ENCODE measurements at regions of chr12 and their contacts with region 1.

Region 1: GRCh38 chr12:68331869-68332727 is at the start of gene MDM1:
- DNase-seq: peak; percentile 97
- ATAC-seq: peak; percentile 97
- H3K4me3 ChIP-seq: peak within 1 kb of the TSS; percentile 79 to 85 (median 82)
- H3K4me3 Mint-ChIP-seq: peak within 1 kb of the TSS; percentile 94
- H3K27ac ChIP-seq: peak within 1 kb of the TSS; percentile 55 to 78
- H3K27ac Mint-ChIP-seq: peak within 1 kb of the TSS; percentile 90
- H3K4me1 ChIP-seq: peaks cover 12 to 14% of the 10 kb centered on the region in 2 donors
- H3K4me1 Mint-ChIP-seq: peaks cover 40% of the 10 kb centered on the region
- H3K27me3 ChIP-seq: no peaks in the 10 kb centered on the region
- H3K27me3 Mint-ChIP-seq: no peaks in the 10 kb centered on the region
- CTCF ChIP-seq: no peak
- total RNA-seq, gene MDM1: 38.3 and 38.9 TPM in 2 replicates

Region 2: GRCh38 chr12:67268896-67269631 is 1063.0 kb before region 1 on chr12 and contains the start of gene CAND1:
- CTCF ChIA-PET with region 1: no interaction called
- POLR2A ChIA-PET with region 1: no interaction called
- intact Hi-C with region 1: loop called (anchors 1 kb)
- DNase-seq: peak; percentile 99
- ATAC-seq: peak; percentile 78
- H3K4me3 ChIP-seq: peak within 1 kb of the TSS; percentile 67 to 94 (median 80)
- H3K4me3 Mint-ChIP-seq: peak within 1 kb of the TSS; percentile 86
- H3K27ac ChIP-seq: peak within 1 kb of the TSS; percentile 90 to 94
- H3K27ac Mint-ChIP-seq: peak within 1 kb of the TSS; percentile 91
- H3K4me1 ChIP-seq: peaks cover 24 to 25% of the 10 kb centered on the region in 2 donors
- H3K4me1 Mint-ChIP-seq: peaks cover 34% of the 10 kb centered on the region
- H3K27me3 ChIP-seq: no peaks in the 10 kb centered on the region
- H3K27me3 Mint-ChIP-seq: no peaks in the 10 kb centered on the region
- CTCF ChIP-seq: no peak
- total RNA-seq, gene CAND1: 108 and 110 TPM in 2 replicates

Region 3: DNA sequence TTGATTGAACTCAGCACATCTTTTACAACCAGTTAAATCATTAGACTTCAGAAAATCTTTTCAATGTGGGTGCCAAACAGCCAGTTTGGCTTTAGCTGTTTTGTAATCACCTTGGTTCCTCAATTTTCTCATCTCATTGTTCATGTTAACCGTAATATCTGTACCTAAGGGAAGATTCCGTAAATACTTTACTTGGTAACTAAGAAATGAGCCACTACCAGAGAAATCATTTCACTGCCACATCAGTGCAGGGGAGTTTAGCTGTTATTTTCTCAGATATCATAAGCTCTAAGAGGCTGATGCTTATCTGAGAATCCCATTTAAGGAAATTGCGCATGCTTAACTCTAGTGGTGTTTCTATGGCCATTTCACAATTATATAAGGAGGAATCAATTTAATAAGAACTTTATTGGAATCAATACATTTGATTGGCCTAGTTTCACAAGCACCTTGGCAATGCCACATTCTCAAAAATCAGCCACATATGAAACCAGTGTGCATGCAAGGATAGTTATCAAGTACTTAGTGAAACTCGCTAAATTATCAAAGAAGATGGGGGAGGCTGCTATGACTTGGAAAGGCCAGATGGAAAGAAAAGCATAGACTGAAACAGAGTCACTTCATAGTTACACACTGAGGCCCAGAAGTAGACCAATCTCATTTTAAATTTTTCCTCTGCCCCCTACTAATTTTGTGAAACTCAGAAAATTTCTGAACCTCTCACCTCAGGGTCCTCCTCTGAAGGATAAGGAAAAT is 50.6 kb before region 1 on chr12:
- CTCF ChIA-PET with region 1: no interaction called
- POLR2A ChIA-PET with region 1: no interaction called
- intact Hi-C with region 1: no loop called
- DNase-seq: no peak
- ATAC-seq: no peak
- H3K4me3 ChIP-seq: no peak overlapping the region
- H3K4me3 Mint-ChIP-seq: no peak overlapping the region
- H3K27ac ChIP-seq: no peak overlapping the region
- H3K27ac Mint-ChIP-seq: no peak overlapping the region
- H3K4me1 ChIP-seq: no peaks in the 10 kb centered on the region
- H3K4me1 Mint-ChIP-seq: no peaks in the 10 kb centered on the region
- H3K27me3 ChIP-seq: peaks cover 0 to 5% (median 1%) of the 10 kb centered on the region in 4 experiments
- H3K27me3 Mint-ChIP-seq: peaks cover 4% of the 10 kb centered on the region
- CTCF ChIP-seq: no peak

Region 4: DNA sequence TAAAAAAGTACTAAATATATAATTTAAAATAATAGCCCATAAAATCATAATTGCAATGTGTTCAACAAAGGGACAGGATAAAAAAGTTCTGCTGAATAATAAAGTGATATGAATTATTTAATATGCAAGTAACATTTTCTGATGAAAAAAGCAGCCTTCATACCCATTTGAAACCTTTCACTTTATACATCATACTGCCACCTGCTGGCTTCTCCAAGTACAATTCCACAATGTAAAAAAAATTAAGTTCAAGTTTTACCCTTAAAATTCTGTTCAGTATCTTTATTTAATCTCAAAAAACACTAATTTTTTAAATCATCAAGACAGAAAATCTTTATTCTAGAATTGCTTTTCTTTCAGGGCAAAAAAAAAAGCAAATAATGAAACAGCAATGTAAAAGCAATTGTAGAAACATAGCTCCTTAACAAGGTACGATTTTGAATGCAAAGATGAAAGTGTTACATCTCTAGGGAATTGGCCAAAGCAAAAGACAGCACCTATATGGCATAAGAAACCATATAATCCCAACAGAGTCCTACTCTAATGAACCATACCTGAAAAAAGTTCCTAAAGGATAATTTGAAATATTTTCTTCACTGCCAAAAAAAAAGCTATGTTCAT is 14.9 kb before region 1 on chr12:
- CTCF ChIA-PET with region 1: interaction called, 15 read pairs
- POLR2A ChIA-PET with region 1: no interaction called
- intact Hi-C with region 1: no loop called
- DNase-seq: peak; percentile 65
- ATAC-seq: no peak
- H3K4me3 ChIP-seq: no peak overlapping the region
- H3K4me3 Mint-ChIP-seq: no peak overlapping the region
- H3K27ac ChIP-seq: no peak overlapping the region
- H3K27ac Mint-ChIP-seq: no peak overlapping the region
- H3K4me1 ChIP-seq: no peaks in the 10 kb centered on the region
- H3K4me1 Mint-ChIP-seq: no peaks in the 10 kb centered on the region
- H3K27me3 ChIP-seq: no peaks in the 10 kb centered on the region
- H3K27me3 Mint-ChIP-seq: no peaks in the 10 kb centered on the region
- CTCF ChIP-seq: peak; percentile 89

Region 5: DNA sequence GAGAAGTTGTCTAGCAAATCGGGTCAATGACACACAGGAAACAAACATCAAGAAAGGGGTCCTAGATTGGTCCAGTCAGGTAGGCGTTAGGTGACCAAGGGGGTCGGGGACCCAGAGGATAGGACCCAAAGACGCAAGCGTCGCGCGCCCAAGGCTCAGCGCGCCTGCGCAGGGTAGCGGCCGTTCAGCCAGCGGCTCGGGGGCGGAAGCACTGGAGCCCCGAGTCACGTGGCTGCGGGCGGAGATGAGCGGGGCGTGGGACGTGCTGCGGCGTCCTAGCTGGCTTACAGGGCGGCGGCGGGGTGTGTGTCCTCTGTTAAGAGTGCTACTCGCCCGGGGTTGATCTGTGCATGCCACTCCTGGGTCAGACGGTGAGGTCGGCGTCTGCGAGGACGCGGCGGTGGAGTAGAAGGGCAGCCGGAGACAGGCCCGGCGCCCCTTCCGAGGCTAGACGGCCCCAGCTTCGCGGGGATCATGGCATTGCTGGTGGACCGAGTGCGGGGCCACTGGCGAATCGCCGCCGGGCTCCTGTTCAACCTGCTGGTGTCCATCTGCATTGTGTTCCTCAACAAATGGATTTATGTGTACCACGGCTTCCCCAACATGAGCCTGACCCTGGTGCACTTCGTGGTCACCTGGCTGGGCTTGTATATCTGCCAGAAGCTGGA is 413.9 kb after region 1 on chr12 and contains the start of gene SLC35E3:
- CTCF ChIA-PET with region 1: interaction called, 4 read pairs
- POLR2A ChIA-PET with region 1: no interaction called
- intact Hi-C with region 1: loop called (anchors 1 kb)
- DNase-seq: peak; percentile 93
- ATAC-seq: peak; percentile 97
- H3K4me3 ChIP-seq: peak within 1 kb of the TSS; percentile 75 to 96 (median 89)
- H3K4me3 Mint-ChIP-seq: peak within 1 kb of the TSS; percentile 97
- H3K27ac ChIP-seq: peak within 1 kb of the TSS; percentile 71 to 89
- H3K27ac Mint-ChIP-seq: peak within 1 kb of the TSS; percentile 95
- H3K4me1 ChIP-seq: peaks cover 21 to 26% of the 10 kb centered on the region in 2 donors
- H3K4me1 Mint-ChIP-seq: peaks cover 53% of the 10 kb centered on the region
- H3K27me3 ChIP-seq: no peaks in the 10 kb centered on the region
- H3K27me3 Mint-ChIP-seq: no peaks in the 10 kb centered on the region
- CTCF ChIP-seq: no peak
- total RNA-seq, gene SLC35E3: 15.1 TPM in 2 replicates

Region 6: GRCh38 chr12:69585189-69586062 is 1253.3 kb after region 1 on chr12 and contains the start of gene CCT2:
- CTCF ChIA-PET with region 1: interaction called, 3 read pairs
- POLR2A ChIA-PET with region 1: no interaction called
- intact Hi-C with region 1: loop called (anchors 5 kb)
- DNase-seq: peak; percentile 98
- ATAC-seq: peak; percentile 93
- H3K4me3 ChIP-seq: peak within 1 kb of the TSS; percentile 83 to 96 (median 90)
- H3K4me3 Mint-ChIP-seq: peak within 1 kb of the TSS; percentile 97
- H3K27ac ChIP-seq: peak within 1 kb of the TSS; percentile 91 to 97
- H3K27ac Mint-ChIP-seq: peak within 1 kb of the TSS; percentile 96
- H3K4me1 ChIP-seq: peaks cover 6 to 11% of the 10 kb centered on the region in 2 donors
- H3K4me1 Mint-ChIP-seq: peaks cover 12% of the 10 kb centered on the region
- H3K27me3 ChIP-seq: no peaks in the 10 kb centered on the region
- H3K27me3 Mint-ChIP-seq: no peaks in the 10 kb centered on the region
- CTCF ChIP-seq: peak; percentile 60
- total RNA-seq, gene CCT2: 125 TPM in 2 replicates

Measured in B cell (primary cell).